HEK293T (cell line): ENCODE measurements at regions of chr5 and their contacts with region 1.

Region 1: DNA sequence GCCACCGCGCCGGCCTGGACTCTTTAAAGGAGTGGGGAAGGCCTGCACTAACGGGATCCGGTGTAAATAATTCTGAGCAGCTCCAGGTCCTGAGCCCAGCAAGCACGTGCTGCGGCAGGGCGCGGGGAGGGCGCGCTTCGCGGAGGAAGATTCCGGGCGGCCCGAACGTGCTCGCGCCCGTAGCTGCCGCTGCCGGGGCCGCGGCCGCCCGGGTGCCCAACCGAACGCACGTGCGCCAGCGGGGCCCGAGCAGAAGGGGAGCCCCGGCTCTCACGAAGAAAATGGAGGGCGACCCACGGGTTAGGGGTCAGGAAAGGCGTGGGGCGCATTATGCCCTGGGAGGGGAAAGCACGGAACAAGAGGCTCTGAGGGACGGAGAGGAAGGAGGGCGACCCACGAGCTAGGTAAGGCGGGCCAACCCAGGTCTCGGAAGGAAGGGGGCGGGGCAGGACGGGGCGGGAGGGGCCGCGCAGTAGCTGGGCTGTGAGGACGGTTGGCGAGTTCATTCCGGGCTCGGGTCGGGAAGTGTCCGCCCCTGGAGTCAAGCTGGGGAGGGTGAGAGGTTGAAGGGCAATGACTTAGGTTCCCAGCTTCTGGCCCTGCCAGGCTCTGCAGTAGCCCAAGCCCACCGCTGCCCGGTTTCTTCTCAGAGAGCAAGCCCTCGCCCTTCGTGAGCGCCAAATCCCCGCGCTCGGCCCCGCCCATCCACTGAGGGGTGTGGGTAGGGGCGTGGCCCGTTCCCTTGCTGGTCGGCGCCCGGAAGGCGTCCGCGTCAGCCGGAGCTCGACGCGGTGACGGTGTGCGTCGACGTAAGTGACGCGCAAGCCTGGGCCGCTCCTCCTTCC is at the start of gene ZNF131:
- DNase-seq: peak; percentile 93

Region 2: GRCh38 chr5:43019614-43020293 is 101.2 kb before region 1 on chr5:
- CTCF ChIA-PET with region 1: no interaction called
- POLR2A ChIA-PET with region 1: interaction called, 14 read pairs
- DNase-seq: no peak

Region 3: DNA sequence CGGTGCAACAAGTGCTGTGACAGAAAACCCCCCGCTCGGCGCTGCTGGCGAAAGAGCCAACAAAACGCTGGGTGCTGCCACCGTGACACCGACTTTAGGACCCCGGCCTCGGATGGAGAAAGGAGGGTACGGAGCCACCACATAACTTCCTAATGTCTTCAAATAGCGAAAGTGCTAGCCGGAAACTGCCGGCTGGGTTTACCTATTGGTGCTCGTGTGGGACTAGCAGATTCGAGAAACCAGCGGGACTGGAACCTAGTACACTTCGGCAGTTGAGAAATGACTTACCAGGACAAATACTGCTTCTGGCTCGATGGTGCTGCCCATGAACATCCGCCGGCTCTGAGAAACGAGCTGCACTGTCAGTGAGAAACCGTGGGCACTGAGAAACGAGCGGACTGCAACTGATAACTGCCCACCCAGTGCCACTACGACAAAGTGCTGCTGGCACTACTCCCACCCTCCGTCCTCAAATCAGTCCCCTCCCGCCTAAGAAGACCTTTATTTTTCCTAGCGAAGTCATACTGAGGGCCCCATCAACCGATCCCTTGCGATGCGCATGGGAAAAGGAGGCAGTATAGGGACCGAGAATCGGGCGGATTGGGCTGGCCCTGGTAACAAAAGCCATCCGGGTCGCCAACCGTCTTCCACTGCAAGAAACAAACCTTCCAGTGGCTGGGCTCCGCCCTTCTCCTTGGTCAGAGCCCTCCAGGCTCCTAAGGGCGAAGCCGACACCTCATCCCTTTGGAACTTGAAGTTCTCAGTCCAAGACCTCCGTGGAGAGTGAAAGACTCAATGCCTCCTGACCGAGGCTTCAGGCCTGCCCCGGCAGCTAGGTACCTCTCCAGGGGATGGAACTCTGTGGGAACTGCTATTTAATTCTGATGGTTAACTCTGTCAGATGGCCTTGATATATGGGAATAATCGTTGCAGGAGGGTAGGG is 53.9 kb before region 1 on chr5:
- CTCF ChIA-PET with region 1: no interaction called
- POLR2A ChIA-PET with region 1: interaction called, 26 read pairs
- DNase-seq: peak; percentile 41

Region 4: DNA sequence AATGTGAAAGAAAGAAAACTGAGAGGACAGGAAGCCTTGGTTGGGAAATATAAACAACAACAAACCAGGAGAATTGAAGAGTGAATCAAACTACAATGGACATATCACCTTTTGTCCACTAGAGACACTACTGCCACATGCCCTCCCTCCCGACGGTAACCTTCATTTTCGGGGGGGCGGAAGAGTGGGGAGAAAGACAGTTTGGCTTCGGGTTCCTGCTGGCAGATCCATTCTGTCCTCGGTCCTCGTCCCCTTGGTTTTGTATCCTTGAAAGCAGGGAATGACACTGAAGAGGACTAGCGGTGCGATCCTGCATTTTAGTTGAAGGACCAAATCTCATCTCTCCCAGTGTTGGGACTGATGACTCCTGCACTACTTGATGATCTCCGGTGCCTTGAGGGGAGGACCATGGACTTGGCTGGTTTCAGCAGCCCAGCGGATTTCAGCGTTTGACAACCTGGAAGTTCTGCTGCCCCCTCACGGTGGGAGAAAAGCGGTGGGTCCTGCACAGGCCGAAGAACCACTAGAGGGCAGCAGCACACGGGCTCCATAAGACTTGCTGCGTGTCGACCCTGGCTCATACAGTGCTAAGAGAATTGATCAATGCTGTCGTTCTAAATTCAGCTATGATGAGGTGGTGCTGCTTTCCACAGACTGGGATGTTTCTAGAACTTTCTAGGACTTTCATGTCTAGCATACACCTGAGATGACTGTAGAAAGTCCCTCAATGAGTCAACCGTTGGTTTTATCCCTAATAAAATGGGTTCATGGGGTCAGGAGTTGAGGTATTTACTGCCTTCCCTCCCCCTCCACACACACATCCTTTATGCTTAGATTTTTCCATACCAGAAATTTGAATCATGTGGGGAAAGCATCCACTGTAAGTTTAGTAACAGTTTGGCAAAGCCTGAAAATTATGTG is 15.3 kb before region 1 on chr5:
- CTCF ChIA-PET with region 1: interaction called, 19 read pairs
- POLR2A ChIA-PET with region 1: interaction called, 45 read pairs
- DNase-seq: peak; percentile 86

Region 5: DNA sequence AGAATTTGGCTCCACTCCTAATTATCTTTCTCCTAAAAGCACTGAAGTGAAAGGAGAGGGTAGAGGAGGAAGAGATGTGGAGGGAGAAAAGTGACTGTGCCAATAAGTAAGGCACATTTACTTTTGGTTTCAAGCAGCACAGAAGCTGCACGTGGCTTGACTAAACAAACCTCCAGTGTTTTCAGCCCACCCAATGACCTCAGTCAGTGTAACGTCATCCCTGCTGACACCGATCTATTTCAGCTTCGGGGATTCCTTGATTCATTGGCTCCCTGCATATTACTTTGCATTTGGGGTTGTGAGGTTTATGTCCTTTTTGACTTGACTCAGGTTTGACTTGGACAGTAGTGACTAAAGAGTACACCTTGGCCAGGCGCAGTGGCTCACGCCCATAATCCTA is 35.4 kb after region 1 on chr5:
- CTCF ChIA-PET with region 1: no interaction called
- POLR2A ChIA-PET with region 1: interaction called, 23 read pairs
- DNase-seq: no peak

Region 6: GRCh38 chr5:43171441-43171840 is 50.5 kb after region 1 on chr5:
- CTCF ChIA-PET with region 1: no interaction called
- POLR2A ChIA-PET with region 1: no interaction called
- DNase-seq: no peak

Region 7: DNA sequence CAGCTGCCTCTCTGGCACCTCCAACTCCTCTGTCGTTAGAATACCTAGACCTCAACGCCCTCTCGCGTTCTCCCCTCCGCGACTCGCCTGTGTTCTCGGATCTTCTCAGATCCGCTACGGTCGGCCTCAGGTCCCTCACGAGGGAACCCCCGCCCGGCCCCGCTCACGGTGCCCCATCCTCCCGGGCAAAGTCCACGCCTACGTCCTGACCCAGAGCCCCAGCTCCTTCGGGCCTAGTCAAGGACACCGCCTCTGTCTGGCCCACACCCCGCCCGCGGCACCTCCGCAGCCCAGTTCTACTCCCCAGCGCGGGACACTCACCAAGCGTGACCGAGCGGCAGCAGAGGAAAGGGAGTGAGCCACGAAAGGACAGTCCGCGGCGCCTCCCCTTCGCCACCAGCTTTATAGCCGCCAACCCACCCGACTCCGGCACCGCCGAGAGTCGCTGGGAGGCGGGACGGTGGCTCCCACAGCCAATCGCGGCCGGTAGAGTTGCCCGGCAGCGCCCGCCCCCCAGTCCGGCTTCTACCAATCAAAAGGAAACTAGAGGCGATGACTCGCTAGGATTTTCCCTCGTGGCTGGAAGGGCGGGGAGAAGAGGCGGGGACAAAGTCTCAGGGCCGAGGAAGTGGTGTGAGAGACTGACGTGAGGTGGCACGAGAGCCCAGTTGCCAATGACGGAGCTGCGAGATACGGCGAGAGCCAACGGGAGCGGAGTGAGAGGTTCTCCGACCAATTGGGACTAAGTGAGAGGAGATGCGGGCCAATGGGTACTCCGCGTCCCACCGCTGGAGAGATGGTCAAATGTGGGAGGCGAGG is 192.3 kb after region 1 on chr5 and contains the start of gene HMGCS1:
- CTCF ChIA-PET with region 1: no interaction called
- POLR2A ChIA-PET with region 1: interaction called, 18 read pairs
- DNase-seq: peak; percentile 92